ENCODE measurements at regions of chr13 and their contacts with region 1.

Region 1: GRCh38 chr13:76886292-76887075 is at the start of gene KCTD12:
- DNase-seq: peak; percentile 65 to 94 (median 82)
- ATAC-seq: peak; percentile 78 to 80
- H3K4me3 Mint-ChIP-seq: peak within 1 kb of the TSS; percentile 85 to 93 (median 91)
- H3K27ac Mint-ChIP-seq: peak within 1 kb of the TSS; percentile 65 to 92 (median 87)
- H3K4me1 Mint-ChIP-seq: peaks cover 12 to 42% (median 33%) of the 10 kb centered on the region in 4 donors
- H3K27me3 Mint-ChIP-seq: peaks cover 0 to 11% (median 0%) of the 10 kb centered on the region in 5 donors
- polyA plus RNA-seq, gene KCTD12: 0.29 to 0.58 (median 0.43) TPM

Region 2: GRCh38 chr13:76667551-76667950 is 218.9 kb before region 1 on chr13:
- POLR2A ChIA-PET with region 1: interaction called, 10 read pairs
- DNase-seq: peak in 6 of 10 donors; percentile 20 to 70 (median 38)
- ATAC-seq: peak; percentile 58 to 73
- H3K4me3 Mint-ChIP-seq: no peak overlapping the region
- H3K27ac Mint-ChIP-seq: no peak overlapping the region
- H3K4me1 Mint-ChIP-seq: no peaks in the 10 kb centered on the region
- H3K27me3 Mint-ChIP-seq: no peaks in the 10 kb centered on the region

Region 3: GRCh38 chr13:76723551-76724232 is 162.8 kb before region 1 on chr13:
- POLR2A ChIA-PET with region 1: interaction called, 18 read pairs
- DNase-seq: peak in 9 of 10 donors; percentile 6 to 67 (median 29)
- ATAC-seq: peak; percentile 94 to 95
- H3K4me3 Mint-ChIP-seq: no peak overlapping the region
- H3K27ac Mint-ChIP-seq: no peak overlapping the region
- H3K4me1 Mint-ChIP-seq: peaks cover 0 to 5% (median 1%) of the 10 kb centered on the region in 4 donors
- H3K27me3 Mint-ChIP-seq: no peaks in the 10 kb centered on the region

Region 4: GRCh38 chr13:76837801-76838200 is 48.7 kb before region 1 on chr13:
- POLR2A ChIA-PET with region 1: no interaction called
- DNase-seq: no peak
- ATAC-seq: no peak
- H3K4me3 Mint-ChIP-seq: no peak overlapping the region
- H3K27ac Mint-ChIP-seq: no peak overlapping the region
- H3K4me1 Mint-ChIP-seq: no peaks in the 10 kb centered on the region
- H3K27me3 Mint-ChIP-seq: peaks cover 0 to 22% (median 9%) of the 10 kb centered on the region in 5 donors

Region 5: GRCh38 chr13:76991796-76992547 is 105.5 kb after region 1 on chr13 and contains the start of gene CLN5:
- POLR2A ChIA-PET with region 1: interaction called, 15 read pairs
- DNase-seq: peak; percentile 89 to 98 (median 96)
- ATAC-seq: peak; percentile 89 to 90
- H3K4me3 Mint-ChIP-seq: peak within 1 kb of the TSS; percentile 88 to 99 (median 96)
- H3K27ac Mint-ChIP-seq: peak within 1 kb of the TSS; percentile 97 to 100 (median 100)
- H3K4me1 Mint-ChIP-seq: peaks cover 22 to 54% (median 51%) of the 10 kb centered on the region in 4 donors
- H3K27me3 Mint-ChIP-seq: peaks cover 0 to 7% (median 0%) of the 10 kb centered on the region in 5 donors
- polyA plus RNA-seq, gene CLN5: 16.9 to 30.8 (median 25.8) TPM

Region 6: GRCh38 chr13:77026818-77027585 is 140.5 kb after region 1 on chr13 and contains the start of gene FBXL3:
- POLR2A ChIA-PET with region 1: interaction called, 16 read pairs
- DNase-seq: peak; percentile 77 to 91 (median 81)
- ATAC-seq: peak; percentile 72 to 75
- H3K4me3 Mint-ChIP-seq: peak within 1 kb of the TSS; percentile 90 to 99 (median 98)
- H3K27ac Mint-ChIP-seq: peak within 1 kb of the TSS; percentile 94 to 99 (median 96)
- H3K4me1 Mint-ChIP-seq: peaks cover 32 to 59% (median 49%) of the 10 kb centered on the region in 4 donors
- H3K27me3 Mint-ChIP-seq: peaks cover 0 to 2% (median 0%) of the 10 kb centered on the region in 5 donors
- polyA plus RNA-seq, gene FBXL3: 29.3 to 44.7 (median 32.6) TPM

Measured in naive thymus-derived CD8-positive, alpha-beta T cell (primary cell).